ENCODE measurements at regions of chr6 and their contacts with region 1.

Region 1: GRCh38 chr6:42279144-42279781 is 61.6 kb upstream of the MRPS10 start:
- DNase-seq: peak in 2 of 5 donors; percentile 41 to 64
- ATAC-seq: peak; percentile 30 to 64 (median 48)
- H3K4me3 ChIP-seq: peak overlapping the region in 1 of 12 donors; percentile 17
- H3K27ac ChIP-seq: peak overlapping the region in 11 of 12 donors; percentile 2 to 78 (median 51)
- H3K4me1 ChIP-seq: peaks cover 5 to 60% (median 41%) of the 10 kb centered on the region in 12 donors
- H3K27me3 ChIP-seq: no peaks in the 10 kb centered on the region
- CTCF ChIP-seq: no peak
- POLR2A ChIP-seq: no peak

Region 2: GRCh38 chr6:41779793-41780545 is 499.3 kb before region 1 on chr6 and contains the start of gene FRS3:
- intact Hi-C with region 1: no loop called
- DNase-seq: peak; percentile 98 to 100 (median 99)
- ATAC-seq: peak; percentile 92 to 95 (median 94)
- H3K4me3 ChIP-seq: peak within 1 kb of the TSS; percentile 61 to 96 (median 79)
- H3K27ac ChIP-seq: peak within 1 kb of the TSS; percentile 76 to 97 (median 91)
- H3K4me1 ChIP-seq: peaks cover 3 to 56% (median 26%) of the 10 kb centered on the region in 12 donors
- H3K27me3 ChIP-seq: no peaks in the 10 kb centered on the region
- CTCF ChIP-seq: peak; percentile 84 to 97 (median 91)
- POLR2A ChIP-seq: peak in 1 of 2 donors; percentile 36
- total RNA-seq, gene FRS3: 3.8 to 6.8 (median 5.1) TPM

Region 3: DNA sequence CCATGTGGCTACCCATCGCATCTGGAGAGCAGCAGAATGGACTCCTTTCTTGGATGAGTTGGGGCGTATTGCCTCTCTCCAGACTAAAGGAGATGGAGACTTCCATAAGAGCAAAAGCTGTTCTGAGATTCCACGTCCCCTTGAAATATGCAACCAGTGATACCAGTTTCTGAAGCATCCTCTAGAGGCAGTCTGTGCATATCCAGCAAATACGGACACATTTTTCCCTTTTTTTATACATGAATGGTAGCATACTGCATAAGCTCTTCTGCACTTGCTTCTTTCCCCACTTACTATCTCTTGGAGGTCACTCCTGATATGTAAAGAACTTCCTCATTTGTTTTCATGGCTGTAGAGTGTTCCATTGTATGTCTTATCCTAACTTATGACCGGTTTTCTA is 194.4 kb before region 1 on chr6:
- intact Hi-C with region 1: no loop called
- DNase-seq: peak in 1 of 5 donors; percentile 2
- ATAC-seq: no peak
- H3K4me3 ChIP-seq: no peak overlapping the region
- H3K27ac ChIP-seq: peak overlapping the region in 7 of 12 donors; percentile 84 to 90 (median 87)
- H3K4me1 ChIP-seq: peaks cover 0 to 43% (median 13%) of the 10 kb centered on the region in 12 donors
- H3K27me3 ChIP-seq: no peaks in the 10 kb centered on the region
- CTCF ChIP-seq: no peak
- POLR2A ChIP-seq: no peak

Region 4: GRCh38 chr6:42166444-42167141 is 112.7 kb before region 1 on chr6:
- intact Hi-C with region 1: no loop called
- DNase-seq: peak in 4 of 5 donors; percentile 41 to 60 (median 57)
- ATAC-seq: peak in 3 of 4 donors; percentile 73 to 82 (median 74)
- H3K4me3 ChIP-seq: no peak overlapping the region
- H3K27ac ChIP-seq: no peak overlapping the region
- H3K4me1 ChIP-seq: peaks cover 0 to 4% (median 0%) of the 10 kb centered on the region in 12 donors
- H3K27me3 ChIP-seq: no peaks in the 10 kb centered on the region
- CTCF ChIP-seq: peak; percentile 88 to 95 (median 92)
- POLR2A ChIP-seq: no peak

Region 5: DNA sequence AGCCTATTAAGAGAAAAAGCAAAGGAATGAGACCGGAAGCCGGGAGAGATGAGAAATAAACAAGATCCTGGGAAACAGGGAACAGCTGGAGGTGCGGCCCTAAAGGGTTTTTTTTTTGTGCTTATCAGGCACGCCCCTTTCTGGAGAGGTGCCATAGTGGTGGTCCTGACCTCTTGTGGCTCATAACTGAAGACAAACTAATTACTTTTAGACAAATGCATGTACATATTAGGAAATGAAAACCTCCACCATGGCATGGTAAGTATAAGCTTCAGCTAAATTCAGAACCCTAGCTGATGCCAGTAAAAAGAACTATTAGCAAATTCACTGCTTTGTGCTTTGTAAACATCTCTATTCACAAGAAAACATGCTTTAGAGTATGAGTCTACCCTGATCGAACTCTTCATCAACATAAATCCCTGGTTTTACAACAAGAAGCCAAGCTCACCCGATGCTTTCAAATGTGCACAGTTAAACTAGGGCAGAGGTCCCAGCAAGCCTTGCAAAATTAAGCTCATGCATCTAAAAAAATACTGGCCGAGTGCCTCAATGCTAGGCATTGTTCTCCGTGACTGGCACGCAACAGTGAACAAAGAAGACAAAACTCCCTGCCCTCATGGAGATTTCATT is 34.8 kb after region 1 on chr6:
- intact Hi-C with region 1: loop called in 1 of 10 experiments (anchors 5 kb)
- DNase-seq: peak in 1 of 5 donors; percentile 39
- ATAC-seq: no peak
- H3K4me3 ChIP-seq: no peak overlapping the region
- H3K27ac ChIP-seq: peak overlapping the region in 7 of 12 donors; percentile 14 to 53 (median 37)
- H3K4me1 ChIP-seq: peaks cover 0 to 49% (median 4%) of the 10 kb centered on the region in 12 donors
- H3K27me3 ChIP-seq: no peaks in the 10 kb centered on the region
- CTCF ChIP-seq: no peak
- POLR2A ChIP-seq: no peak